Activated CD4-positive, alpha-beta T cell treated with anti-CD3 and anti-CD28 coated beads for 36 hours (primary cell): ENCODE measurements at regions of chr1 and their contacts with region 1.

Region 1: DNA sequence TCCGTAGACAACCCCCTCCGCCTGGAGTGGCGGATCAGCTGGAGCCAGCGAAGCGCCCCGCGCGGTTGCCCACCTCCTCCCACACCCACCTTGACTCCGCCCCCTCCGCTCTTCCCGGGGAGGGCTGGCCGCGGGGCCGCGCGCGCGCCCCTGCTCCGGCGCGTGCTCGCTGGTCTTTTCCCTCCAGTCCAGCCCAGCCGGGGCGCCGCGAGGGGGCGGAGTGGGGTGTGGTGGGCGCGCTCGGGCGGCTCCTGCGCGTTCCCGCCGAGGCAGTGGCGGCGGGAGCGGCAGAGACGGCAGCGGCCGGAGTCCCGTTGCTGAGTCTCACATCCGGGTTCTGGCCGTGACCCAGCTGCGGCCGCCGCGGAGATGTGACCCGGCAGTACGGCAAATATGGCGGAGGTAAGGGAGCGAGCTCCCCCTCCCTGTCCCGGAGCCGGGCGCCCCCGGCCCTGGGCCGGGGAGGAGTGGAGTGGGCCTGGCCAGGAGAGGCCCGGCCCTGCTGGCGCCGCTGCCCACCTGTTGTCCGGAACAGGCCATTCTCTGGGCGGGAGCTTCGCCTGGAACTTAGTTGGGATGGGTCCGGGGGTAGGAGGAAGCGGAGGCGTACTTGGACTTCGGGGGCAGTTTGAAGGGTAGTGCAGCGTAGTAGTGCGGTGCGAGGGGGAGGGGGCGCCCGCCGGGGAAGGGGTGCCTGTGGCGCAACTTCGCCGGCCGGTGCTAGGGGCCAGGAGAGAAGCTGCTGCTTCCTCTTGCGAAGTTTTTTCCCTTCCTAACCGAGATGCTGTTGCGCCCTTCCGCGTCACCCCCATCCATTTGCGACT is 5.4 kb downstream of the MIER1 start:
- DNase-seq: peak; percentile 96
- ATAC-seq: peak; percentile 63
- H3K4me3 Mint-ChIP-seq: peak overlapping the region; percentile 86
- H3K27ac Mint-ChIP-seq: peak overlapping the region; percentile 94
- H3K4me1 Mint-ChIP-seq: peaks cover 53% of the 10 kb centered on the region
- H3K27me3 Mint-ChIP-seq: no peaks in the 10 kb centered on the region

Region 2: GRCh38 chr1:66271216-66271903 is 658.9 kb before region 1 on chr1:
- CTCF ChIA-PET with region 1: no interaction called
- POLR2A ChIA-PET with region 1: no interaction called
- intact Hi-C with region 1: loop called in 1 of 2 experiments (anchors 10 kb)
- DNase-seq: peak; percentile 78
- ATAC-seq: peak; percentile 65
- H3K4me3 Mint-ChIP-seq: peak overlapping the region; percentile 47
- H3K27ac Mint-ChIP-seq: peak overlapping the region; percentile 90
- H3K4me1 Mint-ChIP-seq: peaks cover 76% of the 10 kb centered on the region
- H3K27me3 Mint-ChIP-seq: no peaks in the 10 kb centered on the region

Region 3: GRCh38 chr1:66331657-66332547 is 598.3 kb before region 1 on chr1:
- CTCF ChIA-PET with region 1: no interaction called
- POLR2A ChIA-PET with region 1: no interaction called
- intact Hi-C with region 1: loop called in 1 of 2 experiments (anchors 10 kb)
- DNase-seq: peak; percentile 75
- ATAC-seq: peak; percentile 40
- H3K4me3 Mint-ChIP-seq: peak overlapping the region; percentile 91
- H3K27ac Mint-ChIP-seq: peak overlapping the region; percentile 98
- H3K4me1 Mint-ChIP-seq: peaks cover 44% of the 10 kb centered on the region
- H3K27me3 Mint-ChIP-seq: no peaks in the 10 kb centered on the region

Region 4: GRCh38 chr1:66981679-66982078 is 51.5 kb after region 1 on chr1:
- CTCF ChIA-PET with region 1: no interaction called
- POLR2A ChIA-PET with region 1: no interaction called
- intact Hi-C with region 1: loop called in 1 of 2 experiments (anchors 2 kb)
- DNase-seq: peak; percentile 58
- ATAC-seq: peak; percentile 80
- H3K4me3 Mint-ChIP-seq: peak overlapping the region; percentile 14
- H3K27ac Mint-ChIP-seq: peak overlapping the region; percentile 61
- H3K4me1 Mint-ChIP-seq: peaks cover 42% of the 10 kb centered on the region
- H3K27me3 Mint-ChIP-seq: no peaks in the 10 kb centered on the region

Region 5: GRCh38 chr1:67031121-67031858 is 101.1 kb after region 1 on chr1:
- CTCF ChIA-PET with region 1: no interaction called
- POLR2A ChIA-PET with region 1: no interaction called
- intact Hi-C with region 1: no loop called
- DNase-seq: no peak
- ATAC-seq: no peak
- H3K4me3 Mint-ChIP-seq: no peak overlapping the region
- H3K27ac Mint-ChIP-seq: no peak overlapping the region
- H3K4me1 Mint-ChIP-seq: no peaks in the 10 kb centered on the region
- H3K27me3 Mint-ChIP-seq: no peaks in the 10 kb centered on the region

Region 6: GRCh38 chr1:67053785-67054772 is 123.9 kb after region 1 on chr1 and contains the start of gene SLC35D1:
- CTCF ChIA-PET with region 1: no interaction called
- POLR2A ChIA-PET with region 1: no interaction called
- intact Hi-C with region 1: loop called (anchors 2 kb)
- DNase-seq: peak; percentile 77
- ATAC-seq: peak; percentile 79
- H3K4me3 Mint-ChIP-seq: peak within 1 kb of the TSS; percentile 79
- H3K27ac Mint-ChIP-seq: peak within 1 kb of the TSS; percentile 91
- H3K4me1 Mint-ChIP-seq: peaks cover 26% of the 10 kb centered on the region
- H3K27me3 Mint-ChIP-seq: peaks cover 5% of the 10 kb centered on the region
- total RNA-seq, gene SLC35D1: 8.7 to 10.3 TPM

Region 7: GRCh38 chr1:67162957-67163356 is 232.7 kb after region 1 on chr1:
- CTCF ChIA-PET with region 1: no interaction called
- POLR2A ChIA-PET with region 1: interaction called, 4 read pairs
- intact Hi-C with region 1: loop called in 1 of 2 experiments (anchors 5 kb)
- DNase-seq: peak; percentile 71
- ATAC-seq: peak; percentile 73
- H3K4me3 Mint-ChIP-seq: peak overlapping the region; percentile 59
- H3K27ac Mint-ChIP-seq: peak overlapping the region; percentile 90
- H3K4me1 Mint-ChIP-seq: peaks cover 66% of the 10 kb centered on the region
- H3K27me3 Mint-ChIP-seq: peaks cover 1% of the 10 kb centered on the region

Region 8: DNA sequence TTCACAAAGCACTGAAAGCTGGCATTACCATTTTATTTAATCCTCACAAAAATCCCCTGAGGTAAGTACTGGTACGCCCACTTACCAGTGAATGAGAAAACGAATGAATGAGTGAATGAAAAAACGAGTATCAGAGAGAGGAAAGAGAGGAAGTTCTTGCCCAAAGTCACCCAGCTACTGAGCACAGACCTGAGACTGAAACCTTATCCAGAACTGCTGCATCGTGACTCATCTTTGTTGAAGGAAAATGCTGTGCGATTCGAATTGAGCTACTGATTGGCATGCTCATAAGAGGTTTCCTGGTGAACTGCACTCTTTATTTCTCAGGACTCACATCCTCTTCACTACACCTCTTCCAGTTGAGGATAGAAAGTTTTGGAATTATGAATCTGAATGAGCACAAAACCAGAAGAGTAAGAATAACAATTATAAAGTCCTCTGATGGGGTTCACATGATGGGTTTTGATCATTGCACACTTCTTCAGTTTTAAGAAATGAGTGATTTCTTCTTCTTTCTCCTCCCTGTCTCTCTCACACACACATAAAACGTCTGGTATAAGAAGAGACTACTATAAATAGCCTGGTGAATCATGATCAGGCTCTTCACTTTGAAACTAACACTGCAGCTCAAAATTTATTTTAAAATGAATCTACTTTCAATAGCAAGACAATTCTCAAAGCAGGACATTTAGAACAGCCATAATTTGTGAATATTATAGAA is 409.6 kb after region 1 on chr1:
- CTCF ChIA-PET with region 1: no interaction called
- POLR2A ChIA-PET with region 1: interaction called, 3 read pairs
- intact Hi-C with region 1: loop called (anchors 5 to 10 kb)
- DNase-seq: peak; percentile 67
- ATAC-seq: peak; percentile 67
- H3K4me3 Mint-ChIP-seq: peak overlapping the region; percentile 40
- H3K27ac Mint-ChIP-seq: peak overlapping the region; percentile 94
- H3K4me1 Mint-ChIP-seq: peaks cover 87% of the 10 kb centered on the region
- H3K27me3 Mint-ChIP-seq: no peaks in the 10 kb centered on the region